CD4-positive, alpha-beta memory T cell (primary cell): ENCODE measurements at regions of chr14 and their contacts with region 1.

Region 1: GRCh38 chr14:103391048-103391447 is 5.8 kb downstream of the MARK3 start:
- DNase-seq: peak; percentile 45 to 70 (median 50)
- H3K4me3 ChIP-seq: no peak overlapping the region
- H3K4me3 Mint-ChIP-seq: peak overlapping the region in 5 of 8 donors; percentile 26 to 76 (median 37)
- H3K27ac ChIP-seq: no peak overlapping the region
- H3K27ac Mint-ChIP-seq: peak overlapping the region; percentile 61 to 92 (median 75)
- H3K4me1 ChIP-seq: peaks cover 83% of the 10 kb centered on the region
- H3K4me1 Mint-ChIP-seq: peaks cover 43 to 79% (median 62%) of the 10 kb centered on the region in 4 donors
- H3K27me3 ChIP-seq: no peaks in the 10 kb centered on the region
- H3K27me3 Mint-ChIP-seq: no peaks in the 10 kb centered on the region

Region 2: DNA sequence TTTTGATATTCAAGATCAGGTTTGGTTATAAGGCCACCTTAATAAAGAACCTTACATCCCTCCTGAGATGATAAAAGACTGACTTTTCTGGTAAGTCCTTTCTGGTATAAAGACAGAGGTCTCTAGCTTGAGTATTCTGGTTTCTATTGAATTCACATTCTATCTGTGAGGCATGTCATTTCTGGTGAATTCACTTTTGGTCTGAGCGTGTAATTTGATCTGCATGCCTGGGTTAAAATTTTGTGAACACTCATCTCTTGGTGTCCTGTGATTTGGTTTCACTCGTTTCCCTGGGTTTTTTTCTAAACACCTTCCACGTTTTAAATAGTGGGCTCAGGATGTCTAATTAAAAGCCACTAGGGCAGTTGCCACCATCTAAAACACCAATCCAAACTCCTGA is 44.8 kb before region 1 on chr14:
- CTCF ChIA-PET with region 1: interaction called, 12 read pairs
- POLR2A ChIA-PET with region 1: interaction called, 3 read pairs
- intact Hi-C with region 1: no loop called
- DNase-seq: no peak
- H3K4me3 ChIP-seq: no peak overlapping the region
- H3K4me3 Mint-ChIP-seq: no peak overlapping the region
- H3K27ac ChIP-seq: no peak overlapping the region
- H3K27ac Mint-ChIP-seq: peak overlapping the region in 2 of 7 donors; percentile 46 to 80
- H3K4me1 ChIP-seq: no peaks in the 10 kb centered on the region
- H3K4me1 Mint-ChIP-seq: peaks cover 3 to 32% (median 6%) of the 10 kb centered on the region in 4 donors
- H3K27me3 ChIP-seq: no peaks in the 10 kb centered on the region
- H3K27me3 Mint-ChIP-seq: no peaks in the 10 kb centered on the region

Region 3: GRCh38 chr14:103401223-103402214 is 10.5 kb after region 1 on chr14:
- CTCF ChIA-PET with region 1: interaction called, 39 read pairs
- POLR2A ChIA-PET with region 1: interaction called, 4 read pairs
- intact Hi-C with region 1: no loop called
- DNase-seq: peak in 1 of 5 donors; percentile 15
- H3K4me3 ChIP-seq: no peak overlapping the region
- H3K4me3 Mint-ChIP-seq: peak overlapping the region in 7 of 8 donors; percentile 8 to 75 (median 59)
- H3K27ac ChIP-seq: no peak overlapping the region
- H3K27ac Mint-ChIP-seq: peak overlapping the region; percentile 43 to 84 (median 64)
- H3K4me1 ChIP-seq: peaks cover 70% of the 10 kb centered on the region
- H3K4me1 Mint-ChIP-seq: peaks cover 51 to 78% (median 65%) of the 10 kb centered on the region in 4 donors
- H3K27me3 ChIP-seq: no peaks in the 10 kb centered on the region
- H3K27me3 Mint-ChIP-seq: no peaks in the 10 kb centered on the region

Region 4: GRCh38 chr14:103418481-103418818 is 27.4 kb after region 1 on chr14:
- CTCF ChIA-PET with region 1: interaction called, 22 read pairs
- POLR2A ChIA-PET with region 1: no interaction called
- intact Hi-C with region 1: no loop called
- DNase-seq: no peak
- H3K4me3 ChIP-seq: no peak overlapping the region
- H3K4me3 Mint-ChIP-seq: no peak overlapping the region
- H3K27ac ChIP-seq: no peak overlapping the region
- H3K27ac Mint-ChIP-seq: peak overlapping the region in 3 of 7 donors; percentile 42 to 61 (median 55)
- H3K4me1 ChIP-seq: peaks cover 19% of the 10 kb centered on the region
- H3K4me1 Mint-ChIP-seq: peaks cover 39 to 56% (median 47%) of the 10 kb centered on the region in 4 donors
- H3K27me3 ChIP-seq: no peaks in the 10 kb centered on the region
- H3K27me3 Mint-ChIP-seq: no peaks in the 10 kb centered on the region